Ascending aorta (tissue), 2 donors: ENCODE measurements at regions of chr3 and their contacts with region 1.

Region 1: DNA sequence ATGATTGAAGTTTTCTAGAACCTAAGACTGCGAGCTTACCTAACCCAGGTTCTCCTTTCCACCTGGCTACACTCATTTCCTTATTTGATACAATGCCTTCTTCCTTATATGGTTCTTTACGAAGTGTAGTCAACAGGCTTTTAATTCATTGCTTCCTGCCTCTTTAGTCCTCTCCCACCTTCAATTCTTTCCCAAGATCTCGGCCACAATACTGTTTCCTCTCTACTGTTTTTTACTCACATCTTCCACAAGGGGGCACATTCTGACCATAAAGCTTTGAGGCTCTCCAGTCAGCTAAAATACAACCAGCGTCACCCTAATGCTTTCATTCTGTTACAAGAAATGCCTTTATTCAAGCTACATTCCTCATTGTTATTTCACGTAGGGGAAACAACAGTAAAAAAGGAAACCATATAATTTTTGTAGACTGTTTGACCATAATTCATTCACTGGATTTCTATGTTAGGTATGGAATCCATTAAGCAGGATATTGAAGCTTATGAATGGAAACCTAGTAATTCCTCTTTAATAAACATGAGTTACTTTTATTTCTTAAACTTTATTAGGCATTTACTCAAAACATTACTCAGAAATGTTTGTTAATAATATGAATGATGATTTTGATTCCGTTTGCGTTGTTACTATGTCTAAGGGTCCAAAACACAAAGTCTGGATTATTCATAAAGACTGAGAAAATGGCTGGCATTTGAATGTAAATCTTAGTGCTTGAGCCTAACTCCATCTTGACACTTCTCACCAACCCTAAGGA is 29.5 kb upstream of the VEPH1 start:
- DNase-seq: no peak
- H3K4me3 ChIP-seq: no peak overlapping the region
- H3K27ac ChIP-seq: no peak overlapping the region
- H3K4me1 ChIP-seq: peaks cover 0 to 2% of the 10 kb centered on the region in 2 donors
- H3K27me3 ChIP-seq: no peaks in the 10 kb centered on the region
- CTCF ChIP-seq: peak; percentile 50 to 79 (median 65)

Region 2: GRCh38 chr3:157572559-157573270 is 40.0 kb after region 1 on chr3:
- intact Hi-C with region 1: loop called (anchors 1 kb)
- DNase-seq: no peak
- H3K4me3 ChIP-seq: no peak overlapping the region
- H3K27ac ChIP-seq: no peak overlapping the region
- H3K4me1 ChIP-seq: no peaks in the 10 kb centered on the region
- H3K27me3 ChIP-seq: no peaks in the 10 kb centered on the region
- CTCF ChIP-seq: peak; percentile 29 to 71 (median 59)

Region 3: GRCh38 chr3:157805538-157805937 is 272.8 kb after region 1 on chr3:
- intact Hi-C with region 1: no loop called
- DNase-seq: no peak
- H3K4me3 ChIP-seq: no peak overlapping the region
- H3K27ac ChIP-seq: no peak overlapping the region
- H3K4me1 ChIP-seq: no peaks in the 10 kb centered on the region
- H3K27me3 ChIP-seq: no peaks in the 10 kb centered on the region
- CTCF ChIP-seq: no peak

Region 4: DNA sequence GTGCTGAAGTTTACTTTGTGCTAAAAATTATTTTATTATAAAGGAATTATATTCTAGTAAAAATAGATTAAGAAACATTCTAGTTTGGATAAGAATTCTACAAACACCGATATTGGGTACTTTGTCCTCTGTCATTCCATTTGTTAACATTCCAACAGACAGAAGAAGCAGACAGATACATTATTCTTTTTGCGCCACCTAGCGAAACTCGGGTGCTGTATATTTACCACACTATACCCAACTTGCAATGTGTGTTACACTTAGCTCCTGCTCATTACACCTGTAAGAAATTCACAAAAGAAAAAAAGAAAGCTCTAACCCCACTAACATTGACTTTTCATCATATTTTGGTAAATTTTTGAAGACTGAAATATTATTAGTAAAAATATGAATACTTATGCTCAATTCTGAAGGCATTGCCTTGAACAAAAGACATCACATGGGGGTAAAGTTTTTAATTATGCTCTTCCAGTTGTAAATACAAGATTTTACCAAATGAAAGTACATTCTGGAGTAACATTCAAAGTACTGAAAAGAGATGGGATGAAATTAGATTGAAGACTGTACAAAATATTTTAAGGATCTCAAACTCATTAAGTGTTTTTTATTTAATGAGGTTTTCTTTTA is 901.8 kb after region 1 on chr3:
- intact Hi-C with region 1: loop called (anchors 5 kb)
- DNase-seq: peak in 1 of 2 donors; percentile 63
- H3K4me3 ChIP-seq: no peak overlapping the region
- H3K27ac ChIP-seq: no peak overlapping the region
- H3K4me1 ChIP-seq: no peaks in the 10 kb centered on the region
- H3K27me3 ChIP-seq: no peaks in the 10 kb centered on the region
- CTCF ChIP-seq: peak; percentile 41 to 67 (median 42)